ENCODE measurements at regions of chr1 and their contacts with region 1.

Region 1: DNA sequence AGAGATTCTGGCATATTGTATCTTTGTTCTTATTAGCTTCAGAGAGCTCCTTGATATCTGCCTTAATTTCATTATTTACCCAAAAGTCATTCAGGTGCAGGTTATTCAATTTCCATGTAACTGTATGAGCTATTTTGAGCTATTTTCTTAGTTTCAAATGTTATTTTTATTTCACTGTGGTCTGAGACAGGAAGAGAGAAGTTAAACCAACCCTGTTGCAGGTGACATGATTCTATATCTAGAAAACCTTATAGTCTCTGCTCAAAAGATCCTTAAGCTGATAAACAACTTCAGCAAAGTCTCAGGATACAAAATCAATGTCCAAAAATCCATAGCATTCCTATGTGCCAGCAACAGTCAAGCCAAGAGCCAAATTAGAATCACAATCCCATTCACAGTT is 1644.0 kb upstream of the B3GALT2 start:
- DNase-seq: peak; percentile 78
- H3K4me3 ChIP-seq: peak overlapping the region; percentile 50
- H3K27ac ChIP-seq: peak overlapping the region; percentile 89
- H3K4me1 ChIP-seq: peaks cover 54% of the 10 kb centered on the region
- CTCF ChIP-seq: no peak

Region 2: DNA sequence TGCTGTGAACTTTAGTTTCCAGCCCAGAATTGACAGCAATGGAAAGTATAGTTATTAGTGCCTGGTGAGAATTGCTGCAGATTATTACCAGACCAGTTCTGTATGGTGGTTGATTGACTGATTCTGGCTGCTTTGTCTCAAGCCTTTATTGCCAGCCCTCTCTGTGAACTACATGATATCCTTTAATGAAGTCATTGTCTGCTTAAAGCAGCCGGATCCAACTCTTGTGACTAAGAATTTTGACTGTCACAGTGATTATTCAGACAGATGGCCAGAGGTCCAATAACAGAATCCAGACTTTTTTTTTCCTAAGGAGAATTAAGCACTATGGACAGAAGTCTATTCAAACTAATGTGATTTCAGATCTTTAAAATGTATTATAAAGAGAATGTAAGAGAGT is 95.4 kb before region 1 on chr1:
- CTCF ChIA-PET with region 1: no interaction called
- POLR2A ChIA-PET with region 1: no interaction called
- intact Hi-C with region 1: no loop called
- DNase-seq: no peak
- H3K4me3 ChIP-seq: no peak overlapping the region
- H3K27ac ChIP-seq: no peak overlapping the region
- H3K4me1 ChIP-seq: no peaks in the 10 kb centered on the region
- CTCF ChIP-seq: no peak

Region 3: GRCh38 chr1:194755241-194755994 is 75.0 kb before region 1 on chr1:
- CTCF ChIA-PET with region 1: no interaction called
- POLR2A ChIA-PET with region 1: no interaction called
- intact Hi-C with region 1: no loop called
- DNase-seq: no peak
- H3K4me3 ChIP-seq: no peak overlapping the region
- H3K27ac ChIP-seq: no peak overlapping the region
- H3K4me1 ChIP-seq: no peaks in the 10 kb centered on the region
- CTCF ChIP-seq: no peak

Region 4: DNA sequence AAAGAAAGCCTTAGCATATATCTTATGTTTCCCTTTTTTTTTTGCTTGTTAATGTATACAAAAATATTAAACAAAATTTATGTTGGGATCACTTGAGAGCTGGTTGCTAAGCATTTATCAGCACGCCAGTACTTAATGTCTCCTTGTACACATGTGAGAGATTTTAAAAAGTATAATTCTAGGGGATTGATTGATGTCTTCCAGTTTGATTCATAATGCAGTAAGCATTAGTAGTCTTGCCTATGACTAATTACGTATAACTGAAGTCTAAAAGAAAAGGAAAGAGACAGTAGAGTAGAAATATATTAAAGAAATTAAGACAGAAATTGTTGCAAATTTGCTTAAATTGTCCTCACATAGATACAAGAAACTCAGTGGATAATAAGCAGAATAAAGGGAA is 13.5 kb before region 1 on chr1:
- CTCF ChIA-PET with region 1: no interaction called
- POLR2A ChIA-PET with region 1: interaction called, 16 read pairs
- intact Hi-C with region 1: no loop called
- DNase-seq: no peak
- H3K4me3 ChIP-seq: no peak overlapping the region
- H3K27ac ChIP-seq: no peak overlapping the region
- H3K4me1 ChIP-seq: no peaks in the 10 kb centered on the region
- CTCF ChIP-seq: no peak

Region 5: DNA sequence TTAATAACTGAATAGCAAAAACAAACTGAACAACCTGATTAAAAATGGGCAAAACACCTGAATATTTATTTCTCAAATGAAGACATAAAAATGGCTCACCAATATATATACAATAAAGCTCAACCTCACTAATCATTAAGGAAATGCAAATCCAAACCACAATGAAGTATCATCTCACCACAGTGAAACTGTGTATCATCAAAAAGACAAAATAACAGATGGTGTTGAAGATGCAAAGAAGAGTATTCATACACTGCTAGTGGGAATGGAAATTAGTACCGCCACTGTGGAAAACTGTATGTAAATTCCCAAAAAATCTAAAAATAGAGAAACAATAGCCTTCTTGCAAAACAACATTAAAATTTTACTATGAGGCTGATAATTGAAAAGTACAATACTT is 16.1 kb after region 1 on chr1:
- CTCF ChIA-PET with region 1: no interaction called
- POLR2A ChIA-PET with region 1: interaction called, 17 read pairs
- intact Hi-C with region 1: no loop called
- DNase-seq: no peak
- H3K4me3 ChIP-seq: no peak overlapping the region
- H3K27ac ChIP-seq: no peak overlapping the region
- H3K4me1 ChIP-seq: peaks cover 10% of the 10 kb centered on the region
- CTCF ChIP-seq: no peak

Region 6: DNA sequence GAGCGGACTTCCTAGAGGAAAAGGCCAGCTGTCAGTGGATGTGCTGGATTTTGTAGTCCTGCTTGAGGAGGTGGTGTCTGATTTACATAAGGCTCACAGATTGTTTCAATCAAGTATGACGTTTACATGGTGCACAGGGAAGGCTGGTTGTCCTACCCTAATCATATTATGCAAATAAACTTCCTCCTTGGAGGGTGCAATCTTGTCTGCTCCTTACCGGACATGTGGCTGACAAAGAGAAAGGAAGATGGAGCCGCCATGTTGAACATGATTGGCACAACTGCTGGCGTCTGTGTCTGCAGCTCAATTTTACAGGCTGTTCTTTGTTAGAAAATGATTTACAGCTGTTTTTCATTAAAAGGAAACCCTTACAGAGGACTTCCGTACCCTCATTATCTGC is 121.8 kb after region 1 on chr1:
- CTCF ChIA-PET with region 1: no interaction called
- POLR2A ChIA-PET with region 1: no interaction called
- intact Hi-C with region 1: no loop called
- DNase-seq: no peak
- H3K4me3 ChIP-seq: no peak overlapping the region
- H3K27ac ChIP-seq: no peak overlapping the region
- H3K4me1 ChIP-seq: no peaks in the 10 kb centered on the region
- CTCF ChIP-seq: no peak

Measured in OCI-LY7 (cell line).